MCF 10A (cell line): ENCODE measurements at regions of chr17 and their contacts with region 1.

Region 1: GRCh38 chr17:40417609-40418427 is at the start of gene TOP2A:
- DNase-seq: peak; percentile 100
- H3K4me3 Mint-ChIP-seq: peak within 1 kb of the TSS; percentile 96
- H3K27ac Mint-ChIP-seq: peak within 1 kb of the TSS; percentile 82
- H3K4me1 Mint-ChIP-seq: peaks cover 8% of the 10 kb centered on the region
- H3K27me3 Mint-ChIP-seq: no peaks in the 10 kb centered on the region
- CTCF ChIP-seq: no peak
- total RNA-seq, gene TOP2A: 100 and 151 TPM in 2 replicates

Region 2: DNA sequence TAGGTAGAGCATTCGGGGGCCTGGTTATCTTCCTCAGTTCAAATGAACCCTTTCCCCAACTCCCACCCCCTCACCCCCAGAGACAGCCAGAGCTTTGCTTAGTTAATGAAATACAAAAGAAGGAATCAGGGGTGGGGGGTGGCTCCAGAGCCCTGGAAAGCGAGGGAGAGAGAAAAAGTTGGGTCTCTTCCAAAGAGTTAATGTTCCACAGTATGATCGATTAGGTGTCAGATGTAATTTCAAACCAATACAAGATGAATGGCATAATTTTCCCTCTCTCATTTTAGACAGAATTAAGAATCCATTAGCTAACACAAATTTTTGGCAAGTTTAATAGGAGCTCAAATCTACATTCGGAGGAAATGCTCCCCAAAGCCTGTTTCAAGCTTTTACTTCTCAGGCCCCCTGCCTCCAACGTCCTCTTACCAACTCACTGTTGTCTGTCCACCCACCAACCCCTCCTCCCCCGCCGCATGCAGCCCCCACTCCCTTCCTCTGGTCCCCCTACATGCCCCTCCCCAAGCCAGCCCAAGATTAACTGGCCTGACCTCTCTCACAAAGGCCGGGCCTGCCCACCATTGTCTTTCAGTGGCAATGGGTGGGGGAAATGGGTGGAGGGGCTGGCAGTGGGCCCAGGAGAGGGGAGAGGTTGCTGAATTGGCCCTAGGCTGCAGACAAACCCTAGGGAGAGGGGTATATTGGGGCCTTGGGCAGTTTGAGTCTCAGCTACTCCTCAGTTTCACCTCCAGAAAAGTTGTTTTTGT is 838.3 kb before region 1 on chr17:
- CTCF ChIA-PET with region 1: no interaction called
- POLR2A ChIA-PET with region 1: no interaction called
- intact Hi-C with region 1: no loop called
- DNase-seq: no peak
- H3K4me3 Mint-ChIP-seq: no peak overlapping the region
- H3K27ac Mint-ChIP-seq: no peak overlapping the region
- H3K4me1 Mint-ChIP-seq: no peaks in the 10 kb centered on the region
- H3K27me3 Mint-ChIP-seq: peaks cover 12% of the 10 kb centered on the region
- CTCF ChIP-seq: no peak

Region 3: DNA sequence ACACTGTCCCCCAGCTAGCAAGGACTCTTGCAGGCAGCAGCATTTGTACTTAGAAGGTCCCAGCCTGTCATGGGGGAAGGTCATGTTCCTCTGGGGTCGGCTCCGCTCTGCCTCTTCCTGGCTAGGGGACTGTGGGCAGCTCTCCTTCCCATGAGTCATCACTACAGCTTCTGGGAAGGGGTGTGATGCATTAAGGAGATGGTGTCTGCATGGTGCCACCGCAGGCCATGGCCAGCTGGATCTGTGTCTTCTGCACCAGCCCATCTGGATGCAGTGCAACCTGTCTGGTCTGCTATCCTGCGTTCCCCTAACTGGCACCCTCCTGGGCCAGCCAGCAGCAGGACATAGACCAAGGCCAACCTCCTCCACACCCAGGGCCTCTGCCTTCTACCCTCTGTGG is 774.5 kb before region 1 on chr17:
- CTCF ChIA-PET with region 1: no interaction called
- POLR2A ChIA-PET with region 1: no interaction called
- intact Hi-C with region 1: no loop called
- DNase-seq: no peak
- H3K4me3 Mint-ChIP-seq: no peak overlapping the region
- H3K27ac Mint-ChIP-seq: no peak overlapping the region
- H3K4me1 Mint-ChIP-seq: peaks cover 30% of the 10 kb centered on the region
- H3K27me3 Mint-ChIP-seq: no peaks in the 10 kb centered on the region
- CTCF ChIP-seq: no peak

Region 4: DNA sequence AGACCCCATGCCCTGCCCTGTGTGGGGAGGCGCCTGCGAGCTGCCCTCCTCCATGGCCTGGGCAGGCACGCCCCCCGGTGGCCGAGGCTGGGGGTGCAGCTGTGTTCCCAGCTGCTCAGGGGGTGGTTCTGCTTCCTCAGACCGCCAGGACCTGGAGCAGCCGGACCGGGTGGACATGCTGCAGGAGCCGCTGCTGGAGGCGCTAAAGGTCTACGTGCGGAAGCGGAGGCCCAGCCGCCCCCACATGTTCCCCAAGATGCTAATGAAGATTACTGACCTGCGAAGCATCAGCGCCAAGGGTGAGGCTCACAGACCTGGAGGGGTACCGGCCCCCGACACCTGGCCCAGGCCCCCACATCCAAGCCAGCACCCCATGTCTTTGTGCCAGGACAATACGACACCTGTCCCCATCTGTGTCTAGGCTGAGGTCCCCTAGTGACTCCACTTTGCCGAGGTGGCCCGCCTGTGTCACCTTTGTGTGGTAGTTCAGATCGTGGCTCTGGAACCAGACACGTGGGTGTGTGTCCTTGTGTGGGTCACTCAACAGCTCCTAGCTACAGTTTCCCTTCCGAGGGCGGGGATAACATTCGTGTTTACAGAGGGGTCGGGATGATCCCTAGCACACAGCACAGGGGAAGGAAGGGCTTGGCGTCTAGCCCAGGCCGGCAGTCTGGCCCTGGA is 62.6 kb before region 1 on chr17:
- CTCF ChIA-PET with region 1: interaction called, 23 read pairs
- POLR2A ChIA-PET with region 1: interaction called, 3 read pairs
- intact Hi-C with region 1: loop called (anchors 2 kb)
- DNase-seq: peak; percentile 56
- H3K4me3 Mint-ChIP-seq: no peak overlapping the region
- H3K27ac Mint-ChIP-seq: no peak overlapping the region
- H3K4me1 Mint-ChIP-seq: peaks cover 7% of the 10 kb centered on the region
- H3K27me3 Mint-ChIP-seq: no peaks in the 10 kb centered on the region
- CTCF ChIP-seq: peak; percentile 94

Region 5: DNA sequence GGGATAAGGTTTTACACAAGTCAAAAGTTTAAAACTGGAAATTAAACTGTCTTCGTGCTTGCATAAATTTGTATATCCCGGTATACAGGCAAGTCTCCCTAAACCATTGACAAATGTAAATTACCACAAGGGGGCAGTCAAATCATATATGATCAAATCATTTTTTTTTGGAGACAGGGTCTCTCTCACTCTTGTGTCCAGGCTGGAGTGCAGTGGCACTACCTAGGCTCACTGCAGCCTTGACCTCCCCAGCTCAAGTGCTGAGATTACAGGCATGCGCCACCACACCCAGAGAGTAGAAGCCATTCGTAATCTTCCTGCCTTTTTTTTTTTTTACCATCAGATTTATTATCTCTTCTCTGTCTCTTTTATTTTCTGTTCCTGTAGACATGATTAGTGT is 18.6 kb before region 1 on chr17:
- CTCF ChIA-PET with region 1: interaction called, 9 read pairs
- POLR2A ChIA-PET with region 1: interaction called, 4 read pairs
- intact Hi-C with region 1: loop called (anchors 2 kb)
- DNase-seq: peak; percentile 61
- H3K4me3 Mint-ChIP-seq: no peak overlapping the region
- H3K27ac Mint-ChIP-seq: no peak overlapping the region
- H3K4me1 Mint-ChIP-seq: peaks cover 6% of the 10 kb centered on the region
- H3K27me3 Mint-ChIP-seq: no peaks in the 10 kb centered on the region
- CTCF ChIP-seq: peak; percentile 46